ENCODE measurements at regions of chrX and their contacts with region 1.

Region 1: DNA sequence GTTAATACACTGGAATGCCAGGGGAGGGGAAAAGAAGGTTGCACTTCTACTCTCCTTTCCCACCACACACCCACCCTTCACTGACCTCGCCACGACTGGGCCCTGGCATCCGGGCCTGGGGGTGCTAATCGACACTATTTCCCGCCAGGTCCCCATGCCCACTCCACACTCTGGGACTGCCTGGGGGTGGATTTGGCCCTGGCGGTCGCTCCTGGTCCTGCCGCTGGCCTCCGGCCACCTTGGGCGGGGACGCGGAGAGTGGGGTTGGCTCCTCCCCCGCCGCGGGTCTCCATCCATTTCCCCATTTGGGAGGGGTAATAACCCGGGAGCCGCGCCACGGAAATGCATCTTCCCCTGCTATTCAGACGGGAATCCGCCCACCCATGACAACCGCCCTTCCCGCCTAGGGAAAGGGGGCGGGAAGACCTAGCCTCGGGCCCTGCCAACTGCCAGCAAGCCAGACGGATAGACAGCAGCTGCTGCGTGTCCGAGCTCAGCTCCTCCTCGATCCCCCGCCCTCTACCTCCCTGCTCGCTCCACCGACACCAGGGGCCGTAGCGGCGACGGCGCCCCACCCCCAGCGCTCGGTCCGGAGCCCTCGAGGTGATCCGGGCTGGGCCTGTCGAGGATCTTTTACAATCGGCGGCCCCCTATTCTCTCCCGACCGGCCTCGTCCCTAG is 78.1 kb downstream of the RLIM start:
- DNase-seq: peak; percentile 92

Region 2: GRCh38 chrX:74291964-74292807 is 244.1 kb before region 1 on chrX:
- intact Hi-C with region 1: loop called (anchors 5 kb)
- DNase-seq: peak; percentile 92

Region 3: GRCh38 chrX:74382613-74383012 is 153.7 kb before region 1 on chrX:
- intact Hi-C with region 1: loop called (anchors 5 kb)
- DNase-seq: no peak

Region 4: DNA sequence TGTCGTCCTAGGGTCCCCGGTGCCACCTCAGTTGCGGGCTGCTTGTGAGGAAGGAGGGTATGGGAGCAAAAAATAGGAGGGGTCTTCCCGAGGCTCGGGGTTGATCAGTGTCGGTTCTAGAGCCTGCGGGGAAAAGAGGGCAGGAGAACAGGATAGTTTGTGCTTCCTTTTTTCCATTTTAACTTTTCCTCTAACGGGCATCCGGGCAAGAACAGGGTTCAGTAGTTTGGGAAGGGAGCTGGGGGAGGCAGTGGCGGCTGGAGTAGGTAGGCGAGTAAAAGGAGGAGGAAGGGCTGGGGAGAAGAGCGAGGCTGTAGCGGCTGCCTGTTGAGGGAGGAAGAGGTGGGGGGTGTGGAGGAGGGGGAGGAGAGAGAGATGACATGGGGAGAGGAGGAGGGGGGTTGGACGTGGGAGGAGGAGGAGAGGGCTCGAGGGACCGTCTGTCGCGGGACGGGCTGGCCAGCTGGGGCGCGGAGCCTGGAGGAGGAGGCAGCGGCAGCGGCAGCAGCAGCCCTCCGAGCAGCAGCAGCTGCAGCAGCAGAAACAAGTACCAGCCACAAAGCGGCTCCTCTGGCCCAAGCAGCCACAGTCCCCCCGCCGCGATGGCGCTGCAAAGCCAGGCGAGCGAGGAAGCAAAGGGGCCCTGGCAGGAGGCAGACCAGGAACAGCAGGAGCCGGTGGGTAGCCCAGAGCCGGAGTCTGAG is 115.1 kb before region 1 on chrX and contains the start of gene SLC16A2:
- intact Hi-C with region 1: loop called (anchors 1 kb)
- DNase-seq: peak; percentile 77
- total RNA-seq, gene SLC16A2: 8.2 TPM

Region 5: GRCh38 chrX:74656079-74656745 is 119.9 kb after region 1 on chrX:
- intact Hi-C with region 1: no loop called
- DNase-seq: no peak